ENCODE measurements at regions of chr19 and their contacts with region 1.

Region 1: GRCh38 chr19:42423462-42424344 is 3.5 kb downstream of the LIPE start:
- DNase-seq: peak; percentile 88 to 96 (median 92)
- ATAC-seq: peak; percentile 84
- H3K4me3 ChIP-seq: peak overlapping the region; percentile 80
- H3K4me3 Mint-ChIP-seq: peak overlapping the region; percentile 92
- H3K27ac ChIP-seq: peak overlapping the region; percentile 63 to 80
- H3K27ac Mint-ChIP-seq: peak overlapping the region; percentile 78
- H3K4me1 ChIP-seq: peaks cover 46% of the 10 kb centered on the region
- H3K4me1 Mint-ChIP-seq: peaks cover 49% of the 10 kb centered on the region
- H3K27me3 ChIP-seq: no peaks in the 10 kb centered on the region
- H3K27me3 Mint-ChIP-seq: no peaks in the 10 kb centered on the region
- CTCF ChIP-seq: no peak

Region 2: GRCh38 chr19:42132851-42133528 is 290.7 kb before region 1 on chr19:
- CTCF ChIA-PET with region 1: no interaction called
- POLR2A ChIA-PET with region 1: interaction called, 7 read pairs
- intact Hi-C with region 1: loop called in 1 of 2 experiments (anchors 5 kb)
- DNase-seq: peak; percentile 71 to 92 (median 84)
- ATAC-seq: peak; percentile 72
- H3K4me3 ChIP-seq: peak overlapping the region; percentile 63
- H3K4me3 Mint-ChIP-seq: peak overlapping the region; percentile 89
- H3K27ac ChIP-seq: peak overlapping the region; percentile 71 to 76
- H3K27ac Mint-ChIP-seq: peak overlapping the region; percentile 71
- H3K4me1 ChIP-seq: peaks cover 78% of the 10 kb centered on the region
- H3K4me1 Mint-ChIP-seq: peaks cover 72% of the 10 kb centered on the region
- H3K27me3 ChIP-seq: no peaks in the 10 kb centered on the region
- H3K27me3 Mint-ChIP-seq: no peaks in the 10 kb centered on the region
- CTCF ChIP-seq: peak; percentile 97

Region 3: DNA sequence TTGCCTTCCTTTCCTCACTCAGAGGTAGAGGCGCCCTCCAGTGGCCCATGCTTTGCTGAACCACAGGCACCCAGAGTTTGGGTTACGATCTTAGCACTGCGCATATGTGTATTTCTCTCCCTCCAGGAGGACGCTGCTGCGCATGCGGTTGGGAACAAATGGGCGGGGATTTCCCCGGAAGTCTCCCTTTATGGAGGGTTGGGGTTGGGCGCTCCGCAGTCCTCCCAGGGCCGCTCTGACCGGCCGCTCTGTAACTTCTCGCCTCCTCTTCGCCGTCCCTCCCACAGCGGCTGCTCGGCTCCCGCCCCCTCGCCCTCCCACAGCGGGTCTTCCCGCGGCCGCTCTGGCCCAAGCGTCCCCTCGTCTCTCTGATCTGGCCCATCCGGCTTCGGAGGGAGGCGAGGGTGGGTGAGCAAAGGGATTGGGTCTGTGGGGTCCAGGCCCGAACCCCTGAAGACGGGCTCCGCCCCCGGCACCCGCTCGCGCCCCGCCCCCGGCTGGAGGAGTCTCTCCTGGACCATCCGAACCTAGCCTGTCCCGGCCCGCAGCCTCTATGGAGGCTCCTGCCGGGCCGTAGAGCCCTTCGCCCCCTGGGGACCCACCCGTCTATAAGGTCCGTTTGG is 98.3 kb before region 1 on chr19 and contains the start of gene MEGF8:
- CTCF ChIA-PET with region 1: no interaction called
- POLR2A ChIA-PET with region 1: no interaction called
- intact Hi-C with region 1: loop called in 1 of 2 experiments (anchors 5 kb)
- DNase-seq: peak; percentile 97 to 99 (median 98)
- ATAC-seq: peak; percentile 95
- H3K4me3 ChIP-seq: peak within 1 kb of the TSS; percentile 84
- H3K4me3 Mint-ChIP-seq: peak within 1 kb of the TSS; percentile 94
- H3K27ac ChIP-seq: peak within 1 kb of the TSS; percentile 46 to 55
- H3K27ac Mint-ChIP-seq: peak within 1 kb of the TSS; percentile 50
- H3K4me1 ChIP-seq: peaks cover 26% of the 10 kb centered on the region
- H3K4me1 Mint-ChIP-seq: peaks cover 25% of the 10 kb centered on the region
- H3K27me3 ChIP-seq: peaks cover 16 to 21% of the 10 kb centered on the region in 2 experiments
- H3K27me3 Mint-ChIP-seq: peaks cover 25% of the 10 kb centered on the region
- CTCF ChIP-seq: peak; percentile 90
- total RNA-seq, gene MEGF8: 4.1 to 4.2 TPM

Region 4: GRCh38 chr19:42396381-42397262 is 27.1 kb before region 1 on chr19:
- CTCF ChIA-PET with region 1: interaction called, 16 read pairs
- POLR2A ChIA-PET with region 1: interaction called, 10 read pairs
- intact Hi-C with region 1: loop called in 1 of 2 experiments (anchors 2 kb)
- DNase-seq: peak; percentile 77 to 96 (median 90)
- ATAC-seq: peak; percentile 90
- H3K4me3 ChIP-seq: peak overlapping the region; percentile 97
- H3K4me3 Mint-ChIP-seq: peak overlapping the region; percentile 89
- H3K27ac ChIP-seq: peak overlapping the region in 1 of 2 donors; percentile 60
- H3K27ac Mint-ChIP-seq: peak overlapping the region; percentile 76
- H3K4me1 ChIP-seq: peaks cover 34% of the 10 kb centered on the region
- H3K4me1 Mint-ChIP-seq: peaks cover 43% of the 10 kb centered on the region
- H3K27me3 ChIP-seq: no peaks in the 10 kb centered on the region
- H3K27me3 Mint-ChIP-seq: peaks cover 6% of the 10 kb centered on the region
- CTCF ChIP-seq: no peak

Region 5: DNA sequence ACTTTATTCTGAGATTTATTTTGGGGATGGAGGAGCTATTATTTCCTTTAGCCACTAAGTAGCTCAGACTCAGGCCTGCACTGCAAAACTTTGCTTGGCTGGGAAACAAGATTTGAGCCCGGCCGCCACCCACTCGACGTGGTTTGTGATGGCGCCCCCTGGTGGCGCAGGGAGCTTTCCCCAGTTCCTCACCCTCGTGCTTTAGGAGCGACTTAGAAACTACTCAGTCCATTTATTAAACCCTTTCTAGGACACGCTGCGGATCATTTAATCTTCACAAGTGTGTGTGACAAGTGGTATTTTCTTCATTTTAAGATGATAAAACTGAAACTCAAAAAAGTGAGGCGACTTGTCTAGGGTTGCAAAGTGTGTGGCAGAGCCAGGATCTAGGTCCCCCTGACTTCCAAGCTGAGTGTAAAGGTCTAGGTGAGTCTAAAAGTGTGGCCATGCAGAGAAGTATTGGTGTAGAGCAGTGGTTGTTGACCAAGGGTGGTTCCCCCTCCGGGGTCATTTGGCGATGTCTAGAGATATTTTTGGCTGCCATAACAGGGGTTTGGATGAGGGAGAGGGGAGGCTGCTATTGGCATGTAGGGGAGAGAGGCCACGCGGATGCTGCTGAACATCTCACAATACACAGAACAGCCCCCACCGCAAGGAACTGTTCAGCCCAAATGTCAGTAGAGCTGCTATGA is 16.8 kb after region 1 on chr19:
- CTCF ChIA-PET with region 1: interaction called, 32 read pairs
- POLR2A ChIA-PET with region 1: interaction called, 13 read pairs
- intact Hi-C with region 1: loop called in 1 of 2 experiments (anchors 1 kb)
- DNase-seq: peak; percentile 65 to 89 (median 77)
- ATAC-seq: peak; percentile 54
- H3K4me3 ChIP-seq: no peak overlapping the region
- H3K4me3 Mint-ChIP-seq: peak overlapping the region; percentile 8
- H3K27ac ChIP-seq: no peak overlapping the region
- H3K27ac Mint-ChIP-seq: peak overlapping the region; percentile 8
- H3K4me1 ChIP-seq: peaks cover 35% of the 10 kb centered on the region
- H3K4me1 Mint-ChIP-seq: peaks cover 46% of the 10 kb centered on the region
- H3K27me3 ChIP-seq: no peaks in the 10 kb centered on the region
- H3K27me3 Mint-ChIP-seq: no peaks in the 10 kb centered on the region
- CTCF ChIP-seq: peak; percentile 98